Activated T-helper 1 cell treated with anti-CD3 and anti-CD28 coated beads, Interleukin-12 subunit alpha, Interleukin-12 subunit beta, Interleukin-2, Interleukin-4 antibody, amounts not matched to agents 30 ng/mL and 10 ng/mL and 1 ng/mL, durations not matched to agents 14 hours and 24 hours and 36 hours (primary cell): ENCODE measurements at regions of chr17 and their contacts with region 1.

Region 1: GRCh38 chr17:72985881-72986720 is 106.4 kb downstream of the SLC39A11 start:
- DNase-seq: peak; percentile 28
- H3K4me3 Mint-ChIP-seq: no peak overlapping the region
- H3K27ac Mint-ChIP-seq: no peak overlapping the region
- H3K4me1 Mint-ChIP-seq: no peaks in the 10 kb centered on the region
- H3K27me3 Mint-ChIP-seq: no peaks in the 10 kb centered on the region

Region 2: GRCh38 chr17:72556944-72557826 is 428.9 kb before region 1 on chr17:
- intact Hi-C with region 1: loop called (anchors 1 kb)
- DNase-seq: peak; percentile 38
- H3K4me3 Mint-ChIP-seq: no peak overlapping the region
- H3K27ac Mint-ChIP-seq: no peak overlapping the region
- H3K4me1 Mint-ChIP-seq: no peaks in the 10 kb centered on the region
- H3K27me3 Mint-ChIP-seq: no peaks in the 10 kb centered on the region

Region 3: GRCh38 chr17:73092523-73093135 is 106.5 kb after region 1 on chr17 and contains the start of gene SLC39A11:
- intact Hi-C with region 1: loop called (anchors 2 kb)
- DNase-seq: peak; percentile 89
- H3K4me3 Mint-ChIP-seq: peak within 1 kb of the TSS; percentile 100
- H3K27ac Mint-ChIP-seq: peak within 1 kb of the TSS; percentile 98
- H3K4me1 Mint-ChIP-seq: peaks cover 22% of the 10 kb centered on the region
- H3K27me3 Mint-ChIP-seq: peaks cover 6% of the 10 kb centered on the region
- total RNA-seq, gene SLC39A11: 20.9 and 25.7 TPM in 2 replicates

Region 4: GRCh38 chr17:73156166-73156840 is 170.2 kb after region 1 on chr17:
- intact Hi-C with region 1: loop called (anchors 1 kb)
- DNase-seq: peak; percentile 35
- H3K4me3 Mint-ChIP-seq: no peak overlapping the region
- H3K27ac Mint-ChIP-seq: no peak overlapping the region
- H3K4me1 Mint-ChIP-seq: no peaks in the 10 kb centered on the region
- H3K27me3 Mint-ChIP-seq: peaks cover 23% of the 10 kb centered on the region

Region 5: DNA sequence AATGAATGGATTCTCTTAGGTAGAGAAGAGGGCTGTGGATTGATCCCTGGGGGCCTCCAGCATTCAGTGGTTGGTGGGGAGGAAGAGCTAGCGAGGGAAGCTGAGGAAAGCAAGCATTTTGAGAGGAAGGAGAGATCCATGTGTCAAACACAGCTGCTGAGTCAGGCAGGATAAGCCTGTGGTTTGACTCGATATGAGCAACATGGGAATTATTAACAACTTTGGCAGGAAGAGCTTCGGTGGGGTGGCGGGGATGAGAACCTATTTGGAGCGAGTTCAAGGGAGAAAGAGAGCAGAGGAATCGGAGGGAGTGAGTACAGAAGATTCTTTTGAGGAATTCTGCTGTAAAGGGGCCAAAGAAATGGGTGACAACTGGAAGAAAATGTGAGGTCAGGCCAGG is 385.2 kb after region 1 on chr17:
- intact Hi-C with region 1: loop called (anchors 1 kb)
- DNase-seq: no peak
- H3K4me3 Mint-ChIP-seq: no peak overlapping the region
- H3K27ac Mint-ChIP-seq: no peak overlapping the region
- H3K4me1 Mint-ChIP-seq: no peaks in the 10 kb centered on the region
- H3K27me3 Mint-ChIP-seq: peaks cover 10% of the 10 kb centered on the region